Sigmoid colon (tissue), 7 donors: ENCODE measurements at regions of chr12 and their contacts with region 1.

Region 1: GRCh38 chr12:96516472-96517430 is 27.4 kb downstream of the CFAP54 start:
- DNase-seq: peak; percentile 84
- H3K4me3 ChIP-seq: no peak overlapping the region
- H3K27ac ChIP-seq: no peak overlapping the region
- H3K4me1 ChIP-seq: peaks cover 0 to 22% (median 9%) of the 10 kb centered on the region in 4 donors
- H3K27me3 ChIP-seq: no peaks in the 10 kb centered on the region
- CTCF ChIP-seq: peak; percentile 46 to 79 (median 61)
- EP300 ChIP-seq: no peak
- POLR2A ChIP-seq: no peak

Region 2: GRCh38 chr12:96211988-96212387 is 304.8 kb before region 1 on chr12:
- intact Hi-C with region 1: loop called (anchors 2 kb)
- DNase-seq: no peak
- H3K4me3 ChIP-seq: no peak overlapping the region
- H3K27ac ChIP-seq: peak overlapping the region in 3 of 4 donors; percentile 47 to 55 (median 51)
- H3K4me1 ChIP-seq: peaks cover 0 to 46% (median 33%) of the 10 kb centered on the region in 4 donors
- H3K27me3 ChIP-seq: no peaks in the 10 kb centered on the region
- CTCF ChIP-seq: no peak
- EP300 ChIP-seq: no peak
- POLR2A ChIP-seq: no peak

Region 3: GRCh38 chr12:96489103-96490056 is 27.4 kb before region 1 on chr12 and contains the start of gene CFAP54:
- intact Hi-C with region 1: loop called (anchors 2 kb)
- DNase-seq: peak; percentile 97
- H3K4me3 ChIP-seq: peak within 1 kb of the TSS; percentile 62 to 76 (median 66)
- H3K27ac ChIP-seq: peak within 1 kb of the TSS; percentile 71 to 88 (median 75)
- H3K4me1 ChIP-seq: peaks cover 0 to 10% (median 4%) of the 10 kb centered on the region in 4 donors
- H3K27me3 ChIP-seq: no peaks in the 10 kb centered on the region
- CTCF ChIP-seq: peak; percentile 67 to 86 (median 79)
- EP300 ChIP-seq: peak in 2 of 4 donors; percentile 54 to 73
- POLR2A ChIP-seq: no peak
- total RNA-seq, gene CFAP54: 1.1 to 10.5 (median 4.1) TPM